Colonic mucosa (tissue), 4 donors: ENCODE measurements at regions of chr10 and their contacts with region 1.

Region 1: DNA sequence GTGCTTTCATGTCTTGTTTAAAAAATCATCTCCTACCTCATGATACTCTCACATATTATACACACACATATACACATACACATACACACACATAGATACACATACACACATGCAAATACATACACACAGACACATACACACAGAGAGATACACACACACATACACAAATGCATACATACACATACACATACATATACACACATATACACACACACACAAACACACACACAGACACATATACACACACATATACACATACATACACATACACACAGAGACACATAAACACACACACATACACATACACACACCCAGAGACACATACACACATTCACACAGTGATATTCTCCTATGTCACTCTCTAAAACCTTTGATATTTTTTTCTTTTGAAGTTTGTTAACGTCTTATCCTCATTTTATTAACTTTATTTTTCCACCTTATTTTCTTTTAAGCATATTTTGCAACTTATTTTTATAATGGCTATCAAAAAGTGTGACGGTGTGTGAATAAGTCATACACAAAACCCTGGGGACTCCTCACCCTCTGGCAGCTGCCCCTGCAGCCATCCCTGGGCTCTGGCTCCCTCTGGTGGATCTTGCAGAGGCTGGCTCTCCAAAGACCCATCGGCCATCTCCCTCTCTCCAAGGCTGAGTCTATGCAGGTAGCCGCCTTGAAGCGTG is 3.9 kb upstream of the C10orf120 start:
- DNase-seq: peak; percentile 66
- H3K4me3 ChIP-seq: no peak overlapping the region
- H3K27ac ChIP-seq: no peak overlapping the region
- H3K4me1 ChIP-seq: no peaks in the 10 kb centered on the region
- H3K27me3 ChIP-seq: no peaks in the 10 kb centered on the region
- CTCF ChIP-seq: peak; percentile 63

Region 2: DNA sequence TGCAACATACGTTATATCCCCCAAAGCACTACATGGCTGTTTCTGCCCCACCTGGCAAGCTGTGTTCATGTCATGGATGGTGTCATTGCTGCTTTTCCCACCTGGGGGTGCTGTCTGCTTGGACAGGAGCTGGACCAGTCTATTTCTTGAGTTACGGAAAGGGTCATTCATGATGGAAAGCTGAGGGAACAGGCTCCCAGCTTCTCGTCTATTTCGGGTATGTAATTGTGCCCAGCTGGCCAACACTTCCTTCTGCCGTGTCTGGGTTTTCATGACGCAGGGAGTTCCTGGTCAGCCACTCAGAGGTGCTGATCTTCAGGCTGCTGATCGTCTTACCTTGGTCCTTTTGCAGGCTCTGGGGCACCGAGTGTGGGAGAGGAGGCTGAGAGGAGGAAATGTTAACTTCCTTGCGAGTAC is 423.8 kb before region 1 on chr10:
- intact Hi-C with region 1: loop called (anchors 10 kb)
- DNase-seq: no peak
- H3K4me3 ChIP-seq: no peak overlapping the region
- H3K27ac ChIP-seq: no peak overlapping the region
- H3K4me1 ChIP-seq: no peaks in the 10 kb centered on the region
- H3K27me3 ChIP-seq: no peaks in the 10 kb centered on the region
- CTCF ChIP-seq: peak; percentile 47

Region 3: GRCh38 chr10:122525788-122526187 is 177.8 kb before region 1 on chr10:
- intact Hi-C with region 1: loop called (anchors 5 kb)
- DNase-seq: peak; percentile 61
- H3K4me3 ChIP-seq: no peak overlapping the region
- H3K27ac ChIP-seq: no peak overlapping the region
- H3K4me1 ChIP-seq: no peaks in the 10 kb centered on the region
- H3K27me3 ChIP-seq: no peaks in the 10 kb centered on the region
- CTCF ChIP-seq: peak; percentile 33

Region 4: DNA sequence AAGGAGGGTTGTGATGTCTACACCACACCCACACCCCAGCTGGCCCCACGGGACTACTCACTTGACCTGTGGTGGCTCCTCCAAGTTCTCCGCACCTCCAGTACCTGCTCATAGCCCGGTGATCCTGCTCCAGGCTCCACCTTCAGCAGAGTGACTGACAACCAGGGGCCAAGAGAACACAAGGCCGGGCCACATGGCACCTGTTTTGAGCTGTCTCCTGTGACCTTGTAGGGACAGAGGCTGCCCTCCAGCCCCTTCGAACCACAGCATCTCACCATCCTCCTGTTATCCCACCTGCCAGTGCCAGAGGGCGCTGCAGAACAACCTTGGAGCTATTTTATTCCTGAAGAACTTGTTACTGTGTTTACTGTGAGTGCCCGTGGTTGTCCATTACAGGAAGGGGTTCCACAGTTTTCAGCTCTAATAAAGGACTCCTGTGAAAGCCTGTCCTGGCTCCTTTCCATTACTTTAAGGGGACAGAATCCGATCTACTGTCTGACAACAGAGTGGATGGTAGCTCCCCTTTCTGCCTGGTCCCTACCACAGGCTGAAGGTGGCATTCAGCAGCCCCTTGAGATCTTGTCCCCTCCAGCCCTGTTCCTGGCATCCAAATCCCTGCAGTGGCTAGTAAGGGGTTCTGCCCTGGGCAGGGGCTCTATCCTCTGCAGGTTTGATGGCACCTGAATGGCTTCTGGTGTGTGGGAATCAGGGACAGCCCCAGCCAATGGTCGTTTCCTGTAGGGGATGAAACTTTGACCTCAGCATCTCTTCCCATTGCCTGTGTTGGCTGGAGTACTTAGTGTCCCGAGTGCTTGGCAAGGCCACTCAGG is 54.8 kb before region 1 on chr10:
- intact Hi-C with region 1: loop called (anchors 5 kb)
- DNase-seq: peak; percentile 31
- H3K4me3 ChIP-seq: no peak overlapping the region
- H3K27ac ChIP-seq: no peak overlapping the region
- H3K4me1 ChIP-seq: no peaks in the 10 kb centered on the region
- H3K27me3 ChIP-seq: no peaks in the 10 kb centered on the region
- CTCF ChIP-seq: peak; percentile 59

Region 5: GRCh38 chr10:122740649-122741048 is 37.1 kb after region 1 on chr10:
- intact Hi-C with region 1: no loop called
- DNase-seq: no peak
- H3K4me3 ChIP-seq: no peak overlapping the region
- H3K27ac ChIP-seq: no peak overlapping the region
- H3K4me1 ChIP-seq: no peaks in the 10 kb centered on the region
- H3K27me3 ChIP-seq: no peaks in the 10 kb centered on the region
- CTCF ChIP-seq: no peak